GM10248 (cell line): ENCODE measurements at regions of chr15 and their contacts with region 1.

Region 1: GRCh38 chr15:20671675-20672074 is 130.1 kb upstream of the GOLGA6L6 start:
- DNase-seq: no peak
- CTCF ChIP-seq: no peak

Region 2: GRCh38 chr15:20645956-20646355 is 25.7 kb before region 1 on chr15:
- CTCF ChIA-PET with region 1: interaction called, 19 read pairs
- POLR2A ChIA-PET with region 1: no interaction called
- DNase-seq: no peak
- CTCF ChIP-seq: no peak

Region 3: GRCh38 chr15:20652914-20653313 is 18.8 kb before region 1 on chr15:
- CTCF ChIA-PET with region 1: interaction called, 19 read pairs
- POLR2A ChIA-PET with region 1: no interaction called
- DNase-seq: no peak
- CTCF ChIP-seq: no peak

Region 4: DNA sequence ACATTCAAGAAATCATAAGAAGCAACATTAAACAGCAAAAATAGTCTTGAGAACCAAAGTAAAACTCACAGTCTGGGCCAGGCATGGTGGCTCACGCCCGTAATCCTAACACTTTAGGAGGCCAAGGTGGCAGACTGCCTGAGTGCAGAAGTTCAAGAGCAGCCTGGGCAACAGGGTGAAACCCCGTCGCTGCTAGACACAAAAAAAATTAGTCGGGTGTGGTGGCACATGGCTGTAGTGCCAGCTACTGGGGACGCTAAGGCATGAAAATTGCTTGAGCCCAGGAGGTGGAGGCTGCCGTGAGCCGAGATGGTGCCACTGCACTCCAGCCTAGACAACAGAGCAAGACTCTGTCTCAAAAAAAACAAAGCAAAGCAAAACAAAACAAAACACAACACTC is 12.4 kb before region 1 on chr15:
- CTCF ChIA-PET with region 1: interaction called, 16 read pairs
- POLR2A ChIA-PET with region 1: no interaction called
- DNase-seq: no peak
- CTCF ChIP-seq: no peak

Region 5: DNA sequence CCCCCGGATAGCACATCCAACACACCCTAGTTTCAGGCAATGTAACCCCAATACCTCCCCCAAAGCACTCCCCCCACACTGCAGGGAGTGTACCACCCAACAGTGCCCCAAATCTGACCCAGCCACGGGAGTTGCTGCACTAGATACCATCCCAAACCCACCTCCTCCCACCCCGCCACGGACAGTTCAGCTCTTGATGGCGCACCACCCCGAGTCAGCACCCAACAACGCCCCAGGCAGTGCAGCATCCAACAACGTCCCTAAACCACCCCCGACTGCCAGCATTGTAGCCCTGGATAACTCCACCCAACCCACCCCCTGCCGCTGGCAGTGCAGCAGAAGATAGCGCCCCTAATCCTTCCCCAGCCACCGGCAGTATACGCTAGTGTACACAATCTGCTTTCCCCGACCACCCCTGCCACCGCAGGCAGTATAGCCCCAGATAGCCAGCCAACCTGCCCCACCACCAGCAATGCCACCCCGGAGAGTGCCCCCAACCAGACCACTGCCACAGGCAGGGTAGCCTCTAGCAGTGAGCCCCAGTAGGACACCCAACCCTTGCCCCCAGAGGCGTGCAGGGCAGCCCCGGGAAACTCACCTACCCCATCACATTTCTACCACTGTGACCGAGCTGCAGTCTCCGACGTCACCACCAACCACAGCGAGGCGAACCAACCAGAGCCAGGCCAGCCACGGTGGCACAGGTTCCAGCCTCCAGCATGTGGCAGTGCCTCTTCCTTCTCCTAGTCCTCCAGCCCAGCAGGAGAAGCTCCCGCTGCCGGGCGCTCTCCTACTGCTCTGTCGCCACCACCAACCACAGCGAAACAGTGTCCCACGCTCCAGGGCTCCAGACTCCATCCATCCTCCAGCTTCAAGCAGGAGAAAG is 590.5 kb after region 1 on chr15:
- CTCF ChIA-PET with region 1: interaction called, 11 read pairs
- POLR2A ChIA-PET with region 1: no interaction called
- DNase-seq: peak; percentile 13
- CTCF ChIP-seq: no peak

Region 6: DNA sequence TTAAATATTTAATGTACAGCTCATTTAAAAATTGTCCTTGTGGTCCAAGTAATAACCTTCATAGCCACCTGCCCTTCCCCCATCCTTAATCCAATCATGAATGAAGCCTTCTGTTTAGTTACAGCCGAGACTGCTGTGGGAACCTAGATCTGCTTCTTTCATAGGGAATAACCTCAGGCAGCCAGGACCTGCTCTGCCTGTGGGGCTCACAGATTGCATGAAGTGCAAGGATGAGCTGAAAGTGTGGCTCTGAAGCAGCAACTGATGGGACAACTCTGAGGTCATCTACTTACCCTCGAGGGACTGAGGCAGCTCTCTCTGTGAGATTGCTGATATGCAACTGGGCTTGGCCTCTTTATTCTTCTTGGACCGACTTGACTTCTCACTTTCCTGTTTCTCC is 598.8 kb after region 1 on chr15:
- CTCF ChIA-PET with region 1: interaction called, 17 read pairs
- POLR2A ChIA-PET with region 1: no interaction called
- DNase-seq: no peak
- CTCF ChIP-seq: no peak